Calu3 (cell line): ENCODE measurements at regions of chr4 and their contacts with region 1.

Region 1: GRCh38 chr4:53013873-53014775 is 152.0 kb downstream of the RASL11B start:
- DNase-seq: no peak
- H3K4me3 Mint-ChIP-seq: no peak overlapping the region
- H3K27ac Mint-ChIP-seq: no peak overlapping the region
- H3K4me1 Mint-ChIP-seq: no peaks in the 10 kb centered on the region
- H3K27me3 Mint-ChIP-seq: no peaks in the 10 kb centered on the region
- CTCF ChIP-seq: no peak

Region 2: DNA sequence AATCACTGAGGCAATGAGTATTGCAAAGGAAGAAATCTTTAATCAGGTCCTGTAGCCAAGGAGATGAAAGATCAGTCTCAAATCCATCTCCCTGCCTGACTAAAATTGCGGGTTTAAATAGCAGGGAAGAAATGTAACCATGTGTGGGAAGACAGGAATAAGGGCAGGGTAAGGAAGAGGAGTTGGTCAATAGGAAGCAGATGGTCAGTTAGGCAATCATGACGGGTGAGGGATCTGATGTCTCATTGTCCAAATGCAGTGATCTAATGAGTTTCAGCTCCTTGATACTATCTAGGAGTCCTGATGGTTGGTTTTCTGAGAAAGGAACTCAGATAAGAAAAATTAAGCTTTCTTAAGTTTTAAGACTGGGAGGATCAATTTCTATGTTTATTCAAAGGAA is 762.3 kb before region 1 on chr4:
- CTCF ChIA-PET with region 1: interaction called, 10 read pairs
- intact Hi-C with region 1: no loop called
- DNase-seq: no peak
- H3K4me3 Mint-ChIP-seq: no peak overlapping the region
- H3K27ac Mint-ChIP-seq: no peak overlapping the region
- H3K4me1 Mint-ChIP-seq: no peaks in the 10 kb centered on the region
- H3K27me3 Mint-ChIP-seq: peaks cover 32% of the 10 kb centered on the region
- CTCF ChIP-seq: no peak

Region 3: GRCh38 chr4:52914051-52914605 is 100.0 kb before region 1 on chr4:
- CTCF ChIA-PET with region 1: no interaction called
- intact Hi-C with region 1: no loop called
- DNase-seq: peak; percentile 11
- H3K4me3 Mint-ChIP-seq: peak overlapping the region; percentile 37
- H3K27ac Mint-ChIP-seq: peak overlapping the region; percentile 64
- H3K4me1 Mint-ChIP-seq: peaks cover 19% of the 10 kb centered on the region
- H3K27me3 Mint-ChIP-seq: no peaks in the 10 kb centered on the region
- CTCF ChIP-seq: no peak

Region 4: DNA sequence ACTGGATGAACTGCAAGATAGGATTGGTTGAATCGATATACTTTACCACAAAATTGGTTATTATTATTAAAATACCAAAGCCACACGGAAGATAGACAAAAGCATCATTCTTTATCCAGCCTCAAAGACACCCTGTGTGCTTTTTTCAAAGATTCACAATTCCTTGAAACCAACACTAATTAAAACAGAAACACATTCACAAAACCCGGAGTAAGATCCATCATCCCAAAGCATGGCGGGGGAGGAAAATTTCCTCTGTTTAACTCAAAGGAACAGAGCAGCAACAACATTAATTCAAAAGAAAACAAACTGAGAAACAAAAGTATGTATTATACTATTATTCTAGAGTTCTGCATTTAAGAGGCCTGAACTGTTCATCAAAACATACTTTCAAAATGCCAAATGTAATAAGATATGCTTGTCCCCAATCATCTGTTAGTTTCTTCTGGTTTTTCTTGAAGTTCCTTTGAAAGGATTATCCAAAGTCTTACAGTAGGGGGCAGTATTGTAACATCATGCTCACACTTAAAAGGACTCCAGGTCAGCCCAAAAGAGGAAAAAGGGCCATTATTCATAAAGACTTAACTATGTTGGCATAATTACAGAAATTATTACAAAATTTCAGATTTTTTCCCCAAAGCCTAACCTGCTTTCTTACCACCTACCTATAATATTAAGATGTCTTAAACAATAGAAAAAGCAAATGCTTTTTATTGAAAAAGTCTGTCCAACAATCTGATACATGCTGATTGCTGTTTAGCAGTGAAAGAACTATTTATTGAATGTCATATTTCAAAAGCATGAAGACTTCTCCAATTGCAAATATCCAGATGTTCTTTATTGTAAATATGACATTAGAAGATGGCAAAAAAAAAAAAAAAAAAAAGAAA is 183.0 kb after region 1 on chr4:
- CTCF ChIA-PET with region 1: no interaction called
- intact Hi-C with region 1: no loop called
- DNase-seq: peak; percentile 9
- H3K4me3 Mint-ChIP-seq: no peak overlapping the region
- H3K27ac Mint-ChIP-seq: no peak overlapping the region
- H3K4me1 Mint-ChIP-seq: no peaks in the 10 kb centered on the region
- H3K27me3 Mint-ChIP-seq: no peaks in the 10 kb centered on the region
- CTCF ChIP-seq: peak; percentile 41